Activated T-helper 1 cell treated with anti-CD3 and anti-CD28 coated beads, Interleukin-12 subunit alpha, Interleukin-12 subunit beta, Interleukin-2, Interleukin-4 antibody, amounts not matched to agents 30 ng/mL and 10 ng/mL and 1 ng/mL, durations not matched to agents 14 hours and 24 hours and 36 hours (primary cell): ENCODE measurements at regions of chr1 and their contacts with region 1.

Region 1: GRCh38 chr1:156892190-156893047 is 1.1 kb upstream of the PEAR1 start:
- DNase-seq: peak; percentile 80
- H3K4me3 Mint-ChIP-seq: peak overlapping the region; percentile 61
- H3K27ac Mint-ChIP-seq: no peak overlapping the region
- H3K4me1 Mint-ChIP-seq: peaks cover 8% of the 10 kb centered on the region
- H3K27me3 Mint-ChIP-seq: peaks cover 58% of the 10 kb centered on the region

Region 2: GRCh38 chr1:156560585-156561183 is 331.7 kb before region 1 on chr1:
- intact Hi-C with region 1: no loop called
- DNase-seq: no peak
- H3K4me3 Mint-ChIP-seq: no peak overlapping the region
- H3K27ac Mint-ChIP-seq: no peak overlapping the region
- H3K4me1 Mint-ChIP-seq: no peaks in the 10 kb centered on the region
- H3K27me3 Mint-ChIP-seq: no peaks in the 10 kb centered on the region

Region 3: GRCh38 chr1:156689035-156689952 is 203.1 kb before region 1 on chr1:
- intact Hi-C with region 1: loop called (anchors 1 kb)
- DNase-seq: peak; percentile 64
- H3K4me3 Mint-ChIP-seq: peak overlapping the region; percentile 69
- H3K27ac Mint-ChIP-seq: no peak overlapping the region
- H3K4me1 Mint-ChIP-seq: peaks cover 32% of the 10 kb centered on the region
- H3K27me3 Mint-ChIP-seq: peaks cover 54% of the 10 kb centered on the region

Region 4: DNA sequence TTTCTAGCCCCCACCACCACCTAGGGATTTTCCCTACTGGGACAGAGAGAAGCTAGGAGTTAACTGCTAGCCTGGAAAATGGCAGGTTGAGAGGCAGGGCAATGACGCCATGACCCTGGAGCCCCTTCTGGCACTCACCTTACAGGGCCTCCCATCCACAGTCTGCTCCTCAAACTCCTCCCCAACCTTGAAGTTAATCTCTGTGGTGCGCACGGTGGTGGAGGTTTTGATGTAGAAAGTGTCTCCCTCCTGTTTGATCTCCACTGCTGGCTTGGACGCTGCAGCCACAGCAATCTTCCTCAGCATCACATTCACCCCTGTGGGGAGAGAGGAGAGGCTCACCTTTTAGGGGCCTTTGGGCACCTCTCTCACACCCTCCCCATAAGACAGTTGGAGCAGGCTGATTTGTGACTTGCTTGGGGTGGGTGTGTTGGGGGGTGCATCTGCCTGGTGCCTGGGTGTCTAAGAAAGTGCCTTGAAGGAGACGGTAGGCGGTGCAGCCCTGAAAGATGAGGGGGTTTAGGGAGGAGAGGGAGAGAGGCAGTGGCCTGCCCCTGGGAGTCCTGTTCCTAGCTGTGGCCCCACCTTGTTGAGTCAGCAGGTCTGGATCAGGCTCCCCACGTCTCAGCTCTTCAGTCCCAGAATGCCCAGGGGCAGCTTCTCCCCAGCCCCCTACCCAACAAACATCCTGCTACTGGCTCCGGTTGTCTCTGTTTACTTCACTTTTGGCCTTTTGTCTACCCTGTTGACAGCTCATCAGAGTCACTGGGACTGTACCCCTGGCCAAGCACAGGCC is 191.5 kb before region 1 on chr1:
- intact Hi-C with region 1: no loop called
- DNase-seq: no peak
- H3K4me3 Mint-ChIP-seq: no peak overlapping the region
- H3K27ac Mint-ChIP-seq: no peak overlapping the region
- H3K4me1 Mint-ChIP-seq: peaks cover 17% of the 10 kb centered on the region
- H3K27me3 Mint-ChIP-seq: peaks cover 34% of the 10 kb centered on the region

Region 5: DNA sequence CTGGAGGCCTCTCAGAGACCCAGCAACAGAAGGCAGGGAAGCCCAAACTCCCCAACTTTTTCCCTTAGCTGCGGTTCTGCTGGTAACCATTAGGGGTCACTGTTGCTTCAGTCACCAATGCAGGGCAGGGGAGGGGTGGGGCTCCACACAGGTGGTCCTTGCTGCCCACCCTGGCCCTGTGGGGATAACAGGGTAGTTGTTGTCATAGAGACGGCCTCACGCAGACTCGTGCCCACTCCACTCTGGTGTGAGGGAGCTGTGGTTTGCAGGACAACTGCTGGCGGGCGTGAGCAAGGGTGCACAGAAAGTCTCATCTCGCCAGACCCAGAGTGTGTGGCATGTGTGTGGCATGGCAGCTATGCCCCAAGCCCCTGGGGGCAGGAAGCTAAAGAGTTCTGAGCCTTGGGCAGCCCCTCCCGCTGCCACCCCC is 53.4 kb before region 1 on chr1:
- intact Hi-C with region 1: loop called (anchors 1 kb)
- DNase-seq: no peak
- H3K4me3 Mint-ChIP-seq: peak overlapping the region; percentile 24
- H3K27ac Mint-ChIP-seq: peak overlapping the region; percentile 54
- H3K4me1 Mint-ChIP-seq: peaks cover 58% of the 10 kb centered on the region
- H3K27me3 Mint-ChIP-seq: peaks cover 15% of the 10 kb centered on the region

Region 6: GRCh38 chr1:156927215-156928042 is 35.0 kb after region 1 on chr1:
- intact Hi-C with region 1: loop called (anchors 1 kb)
- DNase-seq: peak; percentile 62
- H3K4me3 Mint-ChIP-seq: peak overlapping the region; percentile 55
- H3K27ac Mint-ChIP-seq: no peak overlapping the region
- H3K4me1 Mint-ChIP-seq: peaks cover 23% of the 10 kb centered on the region
- H3K27me3 Mint-ChIP-seq: peaks cover 75% of the 10 kb centered on the region

Region 7: DNA sequence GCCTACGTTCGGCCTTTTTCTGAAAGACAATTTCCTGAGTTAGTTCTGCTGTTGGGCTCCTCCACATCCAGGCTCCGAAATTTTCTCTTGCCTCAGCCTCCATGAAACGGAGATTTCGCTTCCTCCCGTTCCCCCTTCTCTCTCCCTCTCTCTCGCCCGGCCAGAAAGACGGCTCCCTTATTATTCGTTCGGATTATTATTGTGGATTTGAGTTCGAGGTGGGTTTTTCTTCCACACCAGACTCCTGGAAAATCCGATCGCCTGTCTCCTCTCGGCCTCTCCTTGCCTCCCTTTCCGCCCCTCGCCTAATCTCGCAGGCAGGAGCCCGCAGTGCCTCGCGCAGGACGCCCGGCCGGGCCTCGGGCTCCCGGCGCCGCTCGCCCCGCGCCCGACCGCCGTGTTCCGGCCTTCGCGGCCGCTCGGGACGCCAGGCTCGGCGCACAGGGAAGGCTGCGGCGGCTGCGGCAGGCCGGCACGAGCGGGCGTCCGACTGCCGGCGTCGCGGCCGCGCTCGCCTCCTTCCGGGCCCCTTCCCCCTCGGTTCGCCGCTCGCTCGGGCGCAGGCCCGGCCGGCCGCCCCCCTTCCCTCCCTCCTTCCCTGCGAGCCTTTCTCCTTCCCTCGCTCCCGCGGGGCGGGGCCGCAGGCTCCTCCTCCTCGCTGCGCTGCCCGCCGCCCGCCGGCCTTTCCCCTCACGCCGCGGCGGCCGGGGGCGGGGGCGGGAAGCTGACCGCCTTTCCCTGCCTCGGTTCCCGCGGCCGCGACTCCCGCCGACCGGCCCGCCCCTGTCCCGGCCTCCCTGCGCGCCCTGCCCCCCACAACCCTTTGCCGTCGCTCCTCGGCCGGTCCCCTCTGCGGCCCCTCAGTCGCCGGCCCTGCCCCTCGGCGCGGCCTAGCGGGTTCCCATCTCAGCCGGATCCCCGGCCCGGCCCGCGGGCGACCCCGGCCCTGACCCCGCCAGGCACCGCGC is 153.1 kb after region 1 on chr1 and contains the start of gene ARHGEF11:
- intact Hi-C with region 1: loop called (anchors 1 kb)
- DNase-seq: peak; percentile 11
- H3K4me3 Mint-ChIP-seq: peak within 1 kb of the TSS; percentile 89
- H3K27ac Mint-ChIP-seq: peak within 1 kb of the TSS; percentile 81
- H3K4me1 Mint-ChIP-seq: peaks cover 11% of the 10 kb centered on the region
- H3K27me3 Mint-ChIP-seq: peaks cover 80% of the 10 kb centered on the region
- total RNA-seq, gene ARHGEF11: 3.2 and 4.2 TPM in 2 replicates